Right ventricle myocardium superior (tissue), 1 donor: ENCODE measurements at regions of chr1 and their contacts with region 1.

Region 1: GRCh38 chr1:155084722-155085503 is 6.3 kb downstream of the EFNA3 start:
- DNase-seq: peak; percentile 97
- ATAC-seq: peak; percentile 94

Region 2: DNA sequence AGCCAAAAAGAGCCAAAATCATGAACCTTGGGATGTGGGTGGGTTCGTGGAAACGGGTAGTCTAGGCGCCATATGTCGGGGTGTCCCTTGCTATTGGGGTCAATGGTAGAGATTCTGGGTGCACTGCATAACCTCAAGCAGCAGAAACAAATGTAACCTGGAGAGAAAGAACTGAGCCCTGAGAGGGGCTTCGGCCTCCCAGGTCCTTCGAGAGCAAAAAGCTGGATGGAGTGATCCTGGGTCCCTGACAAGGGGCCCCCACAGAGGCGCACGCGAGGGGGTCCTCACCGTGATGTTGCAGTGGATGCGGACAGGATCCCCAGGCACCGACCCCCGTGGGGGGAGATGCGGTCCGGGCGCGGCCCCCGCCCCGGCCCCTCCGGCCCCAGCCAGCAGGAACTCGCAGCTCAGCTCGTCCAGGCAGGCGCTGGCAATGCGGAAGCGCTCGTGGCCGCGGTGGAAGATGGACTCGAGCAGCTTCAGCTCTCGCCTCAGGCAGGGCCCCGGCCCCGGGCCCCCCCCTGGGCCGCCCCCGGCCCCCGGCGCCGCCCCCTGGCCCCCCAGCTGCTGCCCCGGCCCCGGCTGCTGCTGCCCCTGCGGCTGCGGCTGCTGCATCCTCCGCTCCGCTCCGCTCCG is 526.9 kb before region 1 on chr1:
- intact Hi-C with region 1: no loop called
- DNase-seq: peak; percentile 80
- ATAC-seq: no peak

Region 3: DNA sequence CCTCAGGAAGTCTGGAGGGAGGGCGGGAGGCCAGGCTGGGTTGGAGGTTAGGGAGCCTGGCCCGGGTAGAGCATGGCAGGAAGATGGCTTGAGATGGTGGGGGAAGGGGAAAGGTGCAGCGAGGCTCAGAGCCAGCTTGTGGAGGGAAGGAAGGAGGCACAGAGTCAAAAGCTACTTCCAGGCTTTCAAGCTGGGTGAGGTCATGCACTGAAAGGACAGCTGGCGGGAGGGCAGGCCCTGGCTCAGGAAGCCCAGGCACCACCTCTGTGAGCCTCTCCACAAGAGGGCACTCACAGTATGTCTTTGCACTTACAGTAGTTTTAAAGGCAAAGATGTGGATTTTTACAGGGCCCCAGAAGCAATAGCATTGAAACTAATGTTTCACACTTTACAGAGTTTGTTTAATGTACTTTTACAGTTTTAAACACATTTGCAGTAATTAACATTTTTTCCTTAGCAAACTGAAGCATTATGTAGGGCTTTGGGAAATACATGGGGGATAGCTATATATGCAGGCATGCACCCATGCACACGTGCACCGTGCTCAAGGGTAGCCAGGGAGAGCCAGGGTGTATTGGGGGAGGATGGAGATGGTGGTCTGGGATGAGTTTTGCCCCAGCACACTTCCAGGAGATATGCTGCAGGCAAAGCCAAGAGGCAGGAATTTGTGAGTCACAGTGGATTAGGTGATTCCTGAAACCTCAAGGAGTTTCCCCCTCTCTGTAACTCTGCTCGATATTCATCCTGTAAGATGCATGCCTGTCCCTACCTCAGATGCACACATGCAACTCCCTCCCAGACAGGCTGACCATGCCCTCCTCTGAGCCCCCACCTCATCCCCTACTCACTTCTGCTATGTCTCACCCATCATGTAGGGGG is 39.9 kb before region 1 on chr1:
- intact Hi-C with region 1: loop called (anchors 5 kb)
- DNase-seq: peak; percentile 88
- ATAC-seq: peak; percentile 96